ENCODE measurements at regions of chr10 and their contacts with region 1.

Region 1: GRCh38 chr10:62467527-62467926 is 93.4 kb downstream of the ZNF365 start:
- DNase-seq: no peak

Region 2: GRCh38 chr10:62405137-62405536 is 62.4 kb before region 1 on chr10:
- intact Hi-C with region 1: no loop called
- DNase-seq: no peak

Region 3: GRCh38 chr10:62545160-62546066 is 77.9 kb after region 1 on chr10:
- intact Hi-C with region 1: loop called (anchors 10 kb)
- DNase-seq: no peak

Measured in cardiac septum (tissue), 1 donor.